GM10248 (cell line): ENCODE measurements at regions of chr1 and their contacts with region 1.

Region 1: DNA sequence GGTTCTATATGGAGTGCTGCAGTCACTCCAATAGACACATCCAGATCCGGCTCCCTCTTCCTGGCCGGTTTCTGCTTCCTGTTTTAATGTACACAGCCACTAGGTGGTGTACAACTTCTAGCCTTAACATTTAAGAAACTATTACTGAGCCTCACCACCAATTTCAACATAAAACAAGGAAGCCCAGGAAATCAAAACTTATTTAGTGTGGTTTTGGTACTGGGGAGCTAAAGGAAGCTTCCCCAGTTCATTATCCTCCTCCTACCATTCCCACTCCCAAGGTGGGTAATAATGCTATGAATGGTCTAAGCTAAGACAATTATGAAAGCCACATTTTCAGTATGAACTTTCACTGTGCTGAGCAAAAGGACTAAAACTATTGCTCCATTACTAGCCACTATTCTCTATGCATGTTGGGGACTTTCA is 25.5 kb upstream of the MTMR11 start:
- DNase-seq: peak; percentile 61
- CTCF ChIP-seq: peak; percentile 74

Region 2: DNA sequence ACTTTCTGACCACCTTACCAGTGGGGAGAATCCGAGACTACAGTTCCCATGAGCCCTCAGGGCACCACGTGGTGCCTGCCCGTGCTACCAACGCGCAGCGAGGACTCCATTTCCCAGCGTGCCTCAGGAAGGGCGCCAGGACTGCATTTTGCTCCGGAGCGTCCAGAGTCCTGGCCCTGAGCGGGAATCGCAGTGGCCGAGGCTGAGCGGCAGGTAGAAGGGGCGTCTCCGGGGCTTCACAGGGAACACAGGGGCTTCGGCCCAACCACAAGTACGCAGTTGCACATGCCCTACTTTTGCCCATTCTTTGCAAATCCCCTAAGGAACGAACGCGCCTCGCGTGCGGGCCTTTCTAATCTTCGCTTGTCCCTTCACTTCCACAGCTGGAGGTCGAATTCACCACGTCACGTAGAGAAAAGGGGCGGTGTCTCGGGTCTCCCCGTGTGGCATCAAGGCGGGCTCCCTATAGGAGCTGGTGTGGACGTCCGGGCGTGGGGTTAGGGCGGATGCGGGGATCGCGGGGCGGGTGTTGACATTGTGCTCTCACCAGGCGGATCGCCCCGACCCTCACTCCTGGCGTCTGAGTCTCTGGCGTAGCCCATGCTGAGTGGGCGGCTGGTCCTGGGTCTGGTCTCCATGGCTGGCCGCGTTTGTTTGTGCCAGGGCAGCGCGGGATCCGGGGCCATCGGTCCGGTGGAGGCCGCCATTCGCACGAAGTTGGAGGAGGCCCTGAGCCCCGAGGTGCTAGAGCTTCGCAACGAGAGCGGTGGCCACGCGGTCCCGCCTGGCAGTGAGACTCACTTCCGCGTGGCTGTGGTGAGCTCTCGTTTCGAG is 62.5 kb before region 1 on chr1 and contains the start of gene BOLA1:
- CTCF ChIA-PET with region 1: no interaction called
- POLR2A ChIA-PET with region 1: no interaction called
- DNase-seq: peak; percentile 96
- CTCF ChIP-seq: no peak

Region 3: DNA sequence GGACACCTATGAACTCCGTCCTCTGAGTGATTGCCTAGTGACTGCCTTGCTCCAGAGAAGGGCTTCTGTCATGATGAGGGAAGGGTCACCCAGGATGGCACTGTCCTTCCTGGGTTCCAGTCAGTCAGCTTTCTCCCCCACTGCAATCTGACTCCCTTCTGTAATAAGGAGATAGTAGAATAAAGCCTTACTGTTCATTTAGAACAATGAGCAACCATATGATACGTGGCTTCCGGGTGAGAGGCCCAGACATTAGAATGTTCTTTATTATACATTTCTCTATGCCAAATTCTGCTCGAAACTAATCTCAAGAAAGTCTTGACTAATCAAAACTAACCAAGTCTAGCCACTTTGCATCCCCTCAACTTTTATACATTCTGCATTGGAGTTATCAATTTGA is 16.9 kb before region 1 on chr1:
- CTCF ChIA-PET with region 1: interaction called, 21 read pairs
- POLR2A ChIA-PET with region 1: no interaction called
- DNase-seq: no peak
- CTCF ChIP-seq: no peak

Region 4: GRCh38 chr1:149986486-149987294 is 24.6 kb after region 1 on chr1:
- CTCF ChIA-PET with region 1: interaction called, 11 read pairs
- POLR2A ChIA-PET with region 1: no interaction called
- DNase-seq: no peak
- CTCF ChIP-seq: no peak

Region 5: GRCh38 chr1:150051089-150051373 is 88.9 kb after region 1 on chr1:
- CTCF ChIA-PET with region 1: interaction called, 15 read pairs
- POLR2A ChIA-PET with region 1: no interaction called
- DNase-seq: no peak
- CTCF ChIP-seq: no peak

Region 6: DNA sequence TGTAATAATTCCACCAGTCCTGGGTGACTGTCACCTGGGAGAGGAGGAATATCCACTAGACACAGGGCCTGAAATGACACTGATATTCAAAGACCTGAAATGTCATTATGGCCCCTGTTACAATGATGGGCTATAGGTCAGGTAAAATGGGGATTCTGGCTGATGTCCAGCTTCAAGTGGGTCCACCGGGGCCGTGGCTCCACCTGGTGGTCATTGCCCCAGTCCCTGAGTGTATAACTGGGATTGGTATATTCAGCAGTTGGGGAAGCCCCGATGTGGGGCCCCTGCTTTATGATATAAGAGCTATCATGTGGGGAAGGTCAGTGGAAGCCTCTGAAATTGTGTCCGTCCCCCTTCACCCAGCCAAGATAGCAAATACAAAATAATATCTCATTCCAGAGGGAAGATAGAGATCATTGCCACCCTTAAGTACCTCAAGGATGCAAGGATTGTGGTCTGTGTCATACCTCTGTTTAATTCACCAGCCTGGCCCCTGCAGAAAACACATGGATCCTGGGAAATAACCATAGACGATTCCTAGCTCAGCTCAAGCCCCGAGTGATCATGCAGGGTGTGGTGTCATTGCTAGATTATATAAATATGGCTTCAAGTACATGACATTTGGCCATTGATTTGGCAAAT is 206.9 kb after region 1 on chr1:
- CTCF ChIA-PET with region 1: interaction called, 23 read pairs
- POLR2A ChIA-PET with region 1: no interaction called
- DNase-seq: peak; percentile 77
- CTCF ChIP-seq: peak; percentile 81

Region 7: GRCh38 chr1:150293433-150294168 is 331.5 kb after region 1 on chr1 and contains the start of gene MRPS21:
- CTCF ChIA-PET with region 1: no interaction called
- POLR2A ChIA-PET with region 1: no interaction called
- DNase-seq: peak; percentile 92
- CTCF ChIP-seq: no peak